Activated CD8-positive, alpha-beta T cell treated with anti-CD3 and anti-CD28 coated beads for 36 hours (primary cell): ENCODE measurements at regions of chr10 and their contacts with region 1.

Region 1: GRCh38 chr10:102072673-102073527 is 7.8 kb downstream of the HPS6 start:
- DNase-seq: peak; percentile 89
- ATAC-seq: peak; percentile 93
- H3K4me3 Mint-ChIP-seq: no peak overlapping the region
- H3K27ac Mint-ChIP-seq: no peak overlapping the region
- H3K4me1 Mint-ChIP-seq: peaks cover 2% of the 10 kb centered on the region
- H3K27me3 Mint-ChIP-seq: no peaks in the 10 kb centered on the region
- CTCF ChIP-seq: peak; percentile 93

Region 2: GRCh38 chr10:101889256-101890210 is 183.4 kb before region 1 on chr10:
- CTCF ChIA-PET with region 1: interaction called, 32 read pairs
- POLR2A ChIA-PET with region 1: no interaction called
- intact Hi-C with region 1: loop called (anchors 10 kb)
- DNase-seq: peak; percentile 92
- ATAC-seq: peak; percentile 80
- H3K4me3 Mint-ChIP-seq: no peak overlapping the region
- H3K27ac Mint-ChIP-seq: no peak overlapping the region
- H3K4me1 Mint-ChIP-seq: no peaks in the 10 kb centered on the region
- H3K27me3 Mint-ChIP-seq: no peaks in the 10 kb centered on the region
- CTCF ChIP-seq: peak; percentile 85

Region 3: DNA sequence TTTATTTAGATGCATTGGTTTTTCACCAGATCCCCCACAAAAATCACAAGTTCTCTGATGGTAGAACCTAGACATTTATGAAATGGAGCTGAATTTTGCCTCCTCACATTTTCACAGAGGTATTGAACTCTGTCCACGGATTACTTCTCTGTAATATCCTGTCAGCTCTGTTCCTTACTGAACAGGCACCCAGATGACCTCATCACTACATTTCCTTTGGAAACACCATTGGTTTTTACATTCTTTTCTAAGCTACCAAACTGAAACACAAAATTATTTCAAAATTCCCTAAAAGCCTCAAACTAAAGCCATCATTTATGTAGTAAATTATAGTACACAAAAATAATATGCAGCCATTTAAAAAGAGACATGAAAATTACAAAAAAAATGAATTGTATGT is 131.0 kb before region 1 on chr10:
- CTCF ChIA-PET with region 1: interaction called, 11 read pairs
- POLR2A ChIA-PET with region 1: no interaction called
- intact Hi-C with region 1: no loop called
- DNase-seq: no peak
- ATAC-seq: no peak
- H3K4me3 Mint-ChIP-seq: no peak overlapping the region
- H3K27ac Mint-ChIP-seq: no peak overlapping the region
- H3K4me1 Mint-ChIP-seq: no peaks in the 10 kb centered on the region
- H3K27me3 Mint-ChIP-seq: no peaks in the 10 kb centered on the region
- CTCF ChIP-seq: no peak

Region 4: GRCh38 chr10:102085336-102085735 is 12.4 kb after region 1 on chr10:
- CTCF ChIA-PET with region 1: interaction called, 25 read pairs
- POLR2A ChIA-PET with region 1: no interaction called
- intact Hi-C with region 1: no loop called
- DNase-seq: no peak
- ATAC-seq: no peak
- H3K4me3 Mint-ChIP-seq: no peak overlapping the region
- H3K27ac Mint-ChIP-seq: no peak overlapping the region
- H3K4me1 Mint-ChIP-seq: no peaks in the 10 kb centered on the region
- H3K27me3 Mint-ChIP-seq: no peaks in the 10 kb centered on the region
- CTCF ChIP-seq: no peak

Region 5: GRCh38 chr10:102114861-102115618 is 42.1 kb after region 1 on chr10:
- CTCF ChIA-PET with region 1: interaction called, 15 read pairs
- POLR2A ChIA-PET with region 1: no interaction called
- intact Hi-C with region 1: no loop called
- DNase-seq: peak; percentile 91
- ATAC-seq: peak; percentile 61
- H3K4me3 Mint-ChIP-seq: peak overlapping the region; percentile 84
- H3K27ac Mint-ChIP-seq: peak overlapping the region; percentile 100
- H3K4me1 Mint-ChIP-seq: peaks cover 50% of the 10 kb centered on the region
- H3K27me3 Mint-ChIP-seq: no peaks in the 10 kb centered on the region
- CTCF ChIP-seq: no peak